Sigmoid colon (tissue), 7 donors: ENCODE measurements at regions of chr21 and their contacts with region 1.

Region 1: DNA sequence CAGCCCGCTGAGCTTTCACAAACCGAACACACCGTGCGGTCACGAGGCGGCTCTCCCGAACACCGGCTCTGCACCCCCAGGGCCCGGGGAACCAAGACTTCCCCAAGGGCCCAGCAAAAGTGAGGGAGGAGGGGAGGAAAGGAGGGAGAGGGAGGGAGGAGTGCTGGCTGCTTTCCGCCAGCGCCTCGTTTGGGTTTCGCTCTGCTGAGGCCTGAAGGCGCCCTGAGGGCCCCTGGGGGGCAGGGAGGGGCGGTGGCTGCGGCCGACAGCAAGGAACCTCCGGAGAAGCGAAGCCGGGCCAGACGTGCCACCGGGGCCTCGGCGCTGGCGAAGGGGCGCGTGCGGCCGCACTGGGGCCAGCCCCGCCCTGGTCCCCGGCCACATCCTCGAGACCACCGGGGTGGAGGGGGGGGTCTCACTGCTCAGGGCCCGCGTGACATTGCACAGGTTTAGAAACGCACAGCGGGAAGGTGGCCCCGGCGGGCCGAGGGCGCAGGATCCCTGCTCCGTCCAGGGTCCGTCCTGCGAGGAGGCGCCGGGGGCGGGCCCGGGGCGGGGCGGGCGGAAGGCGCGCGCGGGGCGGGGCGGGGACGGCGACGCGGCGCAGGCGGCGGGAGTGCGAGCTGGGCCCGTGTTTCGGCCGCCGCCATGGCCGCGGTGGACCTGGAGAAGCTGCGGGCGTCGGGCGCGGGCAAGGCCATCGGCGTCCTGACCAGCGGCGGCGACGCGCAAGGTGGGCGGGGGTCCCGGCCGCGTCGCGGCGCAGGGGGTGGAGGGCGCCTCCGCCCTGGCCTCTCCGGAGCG is at the start of gene PFKL:
- DNase-seq: peak; percentile 81
- H3K4me3 ChIP-seq: peak within 1 kb of the TSS; percentile 80 to 96 (median 92)
- H3K27ac ChIP-seq: peak within 1 kb of the TSS; percentile 89 to 96 (median 92)
- H3K4me1 ChIP-seq: peaks cover 0 to 63% (median 51%) of the 10 kb centered on the region in 4 donors
- H3K27me3 ChIP-seq: peaks cover 0 to 25% (median 25%) of the 10 kb centered on the region in 3 donors
- CTCF ChIP-seq: no peak
- EP300 ChIP-seq: no peak
- POLR2A ChIP-seq: peak in 1 of 2 donors; percentile 33
- total RNA-seq, gene PFKL: 38.0 to 69.8 (median 50.4) TPM

Region 2: DNA sequence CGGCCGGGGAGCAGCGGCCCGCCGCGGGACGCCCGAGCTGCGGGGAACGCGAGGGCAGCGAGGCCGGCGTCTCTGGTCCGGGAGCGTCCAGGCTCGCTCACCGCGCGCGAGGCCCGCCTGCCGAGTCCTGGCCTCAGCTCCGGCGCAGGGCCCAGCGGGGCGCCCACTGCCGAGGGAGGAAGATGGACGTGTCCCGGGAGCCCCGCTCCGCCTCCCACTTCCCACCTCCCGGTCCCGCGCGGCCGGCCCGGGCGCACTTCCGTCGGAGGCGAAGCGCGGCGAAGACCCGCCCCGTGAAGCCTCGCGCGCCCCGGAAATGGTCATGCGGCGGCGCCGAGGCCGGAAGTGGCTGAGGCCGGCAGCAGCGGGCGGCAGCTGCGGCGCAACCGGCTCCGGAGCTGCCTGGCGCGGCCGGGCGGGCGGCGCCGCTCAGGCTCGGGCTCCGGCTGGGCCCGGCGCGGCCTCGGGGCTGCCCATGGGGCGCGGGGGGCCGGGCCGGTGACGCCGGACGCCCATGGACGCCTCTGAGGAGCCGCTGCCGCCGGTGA is 287.6 kb before region 1 on chr21 and contains the start of gene TRAPPC10:
- intact Hi-C with region 1: loop called (anchors 2 kb)
- DNase-seq: peak; percentile 92
- H3K4me3 ChIP-seq: peak within 1 kb of the TSS; percentile 71 to 99 (median 86)
- H3K27ac ChIP-seq: peak within 1 kb of the TSS; percentile 85 to 98 (median 98)
- H3K4me1 ChIP-seq: peaks cover 0 to 42% (median 29%) of the 10 kb centered on the region in 4 donors
- H3K27me3 ChIP-seq: no peaks in the 10 kb centered on the region
- CTCF ChIP-seq: no peak
- EP300 ChIP-seq: no peak
- POLR2A ChIP-seq: peak; percentile 61 to 69
- total RNA-seq, gene TRAPPC10: 18.7 to 26.6 (median 20.3) TPM